PC-3 (cell line): ENCODE measurements at regions of chr14 and their contacts with region 1.

Region 1: DNA sequence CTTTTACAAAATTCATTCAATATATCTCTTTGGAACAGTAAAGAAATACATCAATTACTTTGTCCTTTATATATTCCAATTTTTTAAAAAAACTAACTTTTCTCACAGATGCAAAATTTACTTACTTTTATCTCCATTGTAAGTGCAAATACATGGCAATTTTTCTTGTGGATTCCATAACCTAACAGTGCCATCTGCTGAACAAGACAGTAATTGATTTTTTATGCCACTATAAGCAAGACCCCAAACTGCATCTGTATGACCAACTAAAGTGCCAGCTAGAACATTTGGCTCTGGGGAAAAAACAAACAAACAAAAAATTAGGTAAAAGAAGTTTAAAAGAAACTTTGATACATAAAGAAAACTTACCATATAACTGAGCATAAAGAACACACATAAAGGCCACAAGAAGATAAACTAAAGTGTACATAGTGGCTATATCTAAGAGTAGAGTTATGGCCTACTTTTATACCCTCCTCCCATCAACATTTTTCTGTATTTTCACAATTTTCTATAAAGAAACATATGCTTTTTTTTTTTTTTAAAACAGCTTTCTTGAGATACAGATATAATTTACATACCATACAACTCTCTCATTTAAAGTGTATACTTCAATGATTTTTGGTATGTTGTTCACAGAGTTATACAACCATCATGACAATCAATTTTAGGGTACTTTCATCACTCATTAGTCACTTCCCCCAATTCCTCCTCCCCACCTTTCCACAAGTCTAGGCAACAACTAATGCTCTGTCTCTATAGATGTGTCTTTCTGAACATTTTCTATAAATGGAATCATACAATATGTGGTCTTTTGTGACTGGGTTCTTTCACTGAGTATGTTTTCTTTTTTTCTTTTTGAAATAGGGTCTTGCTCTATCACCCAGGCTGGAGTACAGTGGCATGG is 32.6 kb downstream of the COCH start:
- DNase-seq: peak; percentile 53
- ATAC-seq: peak; percentile 76
- H3K4me3 ChIP-seq: no peak overlapping the region
- H3K27ac ChIP-seq: no peak overlapping the region
- H3K4me1 ChIP-seq: no peaks in the 10 kb centered on the region
- H3K27me3 ChIP-seq: no peaks in the 10 kb centered on the region
- CTCF ChIP-seq: peak; percentile 76

Region 2: DNA sequence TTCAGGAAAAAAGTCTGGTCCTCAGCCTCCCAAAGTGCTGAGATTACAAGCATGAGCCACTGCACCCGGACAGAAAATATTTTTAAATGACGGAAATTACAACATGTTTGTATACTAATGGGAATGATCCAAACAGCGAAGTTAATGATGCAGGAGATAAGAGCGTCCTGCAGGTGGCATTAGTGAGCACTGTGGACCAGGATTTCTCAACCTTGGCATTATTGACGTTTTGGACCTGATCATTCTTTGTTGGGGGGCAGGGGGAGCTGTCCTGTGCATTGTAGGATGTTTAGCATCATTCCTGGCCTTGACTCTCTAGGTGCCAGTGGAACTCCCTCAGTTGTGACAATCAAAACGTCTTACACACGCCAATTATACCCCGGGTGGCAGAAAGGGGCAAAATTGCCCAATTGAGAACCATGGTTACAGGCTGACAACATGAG is 250.8 kb before region 1 on chr14:
- CTCF ChIA-PET with region 1: no interaction called
- POLR2A ChIA-PET with region 1: no interaction called
- intact Hi-C with region 1: loop called (anchors 2 kb)
- DNase-seq: peak; percentile 57
- ATAC-seq: peak; percentile 56
- H3K4me3 ChIP-seq: no peak overlapping the region
- H3K27ac ChIP-seq: no peak overlapping the region
- H3K4me1 ChIP-seq: peaks cover 4% of the 10 kb centered on the region; the same call in 1 of the 2 replicates
- H3K27me3 ChIP-seq: no peaks in the 10 kb centered on the region
- CTCF ChIP-seq: peak; percentile 81

Region 3: GRCh38 chr14:30706704-30707103 is 200.3 kb before region 1 on chr14:
- CTCF ChIA-PET with region 1: no interaction called
- POLR2A ChIA-PET with region 1: no interaction called
- intact Hi-C with region 1: loop called (anchors 10 kb)
- DNase-seq: no peak
- ATAC-seq: no peak
- H3K4me3 ChIP-seq: no peak overlapping the region
- H3K27ac ChIP-seq: no peak overlapping the region
- H3K4me1 ChIP-seq: no peaks in the 10 kb centered on the region
- H3K27me3 ChIP-seq: no peaks in the 10 kb centered on the region
- CTCF ChIP-seq: no peak

Region 4: GRCh38 chr14:30943694-30944093 is 36.7 kb after region 1 on chr14:
- CTCF ChIA-PET with region 1: no interaction called
- POLR2A ChIA-PET with region 1: no interaction called
- intact Hi-C with region 1: no loop called
- DNase-seq: no peak
- ATAC-seq: no peak
- H3K4me3 ChIP-seq: no peak overlapping the region
- H3K27ac ChIP-seq: no peak overlapping the region
- H3K4me1 ChIP-seq: no peaks in the 10 kb centered on the region
- H3K27me3 ChIP-seq: no peaks in the 10 kb centered on the region
- CTCF ChIP-seq: no peak